Aorta (tissue), 5 donors: ENCODE measurements at regions of chr15 and their contacts with region 1.

Region 1: GRCh38 chr15:45307230-45307924 is 55.3 kb downstream of the SLC28A2 start:
- DNase-seq: no peak
- ATAC-seq: peak; percentile 69
- H3K4me3 ChIP-seq: peak overlapping the region in 1 of 2 donors; percentile 54
- H3K27ac ChIP-seq: no peak overlapping the region
- H3K4me1 ChIP-seq: no peaks in the 10 kb centered on the region
- H3K27me3 ChIP-seq: no peaks in the 10 kb centered on the region

Region 2: DNA sequence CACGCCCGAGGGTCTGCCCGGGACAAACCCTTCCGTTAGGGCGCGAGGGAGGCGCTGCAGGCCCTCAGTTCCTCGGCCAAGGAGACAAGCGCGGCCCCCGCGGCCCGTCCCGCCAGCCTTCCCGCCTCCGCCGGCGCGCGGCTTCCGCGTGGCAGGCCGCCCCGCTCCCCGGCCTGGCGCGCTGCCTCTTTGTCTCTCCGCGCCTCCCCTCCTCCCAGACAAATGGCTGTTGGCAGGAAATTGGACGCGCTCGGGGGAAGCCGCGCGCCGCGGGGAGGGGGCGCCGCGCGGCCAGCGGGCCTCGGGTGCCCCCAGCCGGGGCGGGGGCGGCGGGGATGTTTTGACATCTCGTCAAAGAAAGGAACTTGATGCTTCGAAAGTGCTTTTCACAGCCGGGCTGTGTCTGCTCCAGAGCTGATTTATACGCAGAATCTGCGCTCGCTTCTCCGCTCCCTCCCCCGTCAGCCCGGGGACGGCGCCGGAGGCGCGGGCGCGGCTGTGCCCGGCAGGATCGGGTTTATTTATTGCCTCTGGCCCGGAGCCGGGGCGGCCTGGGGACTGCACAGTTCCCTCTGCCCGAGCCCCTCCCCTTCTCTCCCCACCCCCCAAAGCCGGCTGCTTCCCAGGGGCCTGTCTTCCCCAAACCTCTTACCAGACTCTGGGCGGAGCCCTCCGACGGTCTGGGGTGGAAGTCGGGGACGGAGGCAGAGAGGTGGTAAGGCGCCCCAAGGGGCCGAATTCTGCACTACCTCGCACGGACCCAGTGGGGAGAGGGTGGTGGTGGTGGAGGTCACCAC is 140.3 kb before region 1 on chr15:
- intact Hi-C with region 1: loop called in 1 of 2 experiments (anchors 10 kb)
- DNase-seq: peak; percentile 94
- ATAC-seq: peak; percentile 81
- H3K4me3 ChIP-seq: peak overlapping the region; percentile 69 to 83
- H3K27ac ChIP-seq: peak overlapping the region; percentile 88 to 89
- H3K4me1 ChIP-seq: no peaks in the 10 kb centered on the region
- H3K27me3 ChIP-seq: no peaks in the 10 kb centered on the region

Region 3: DNA sequence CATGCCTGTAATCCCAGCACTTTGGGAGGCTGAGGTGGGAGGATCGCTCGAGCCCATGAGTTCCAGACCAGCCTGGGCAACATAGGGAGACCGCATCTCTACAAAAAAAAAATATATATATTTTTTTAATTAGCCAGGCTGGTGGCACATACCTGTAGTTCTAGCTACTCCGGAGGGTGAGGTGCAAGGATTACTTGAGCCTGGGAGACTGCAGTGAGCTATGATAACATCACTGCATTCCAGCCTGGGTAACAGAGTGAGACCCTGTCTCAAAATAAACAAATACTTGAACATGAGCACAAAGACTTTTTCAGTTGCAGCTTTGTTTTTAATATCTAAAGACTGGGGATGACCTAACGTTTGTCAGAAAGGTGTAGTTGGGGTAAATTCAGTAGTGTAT is 102.2 kb after region 1 on chr15:
- intact Hi-C with region 1: no loop called
- DNase-seq: no peak
- ATAC-seq: no peak
- H3K4me3 ChIP-seq: no peak overlapping the region
- H3K27ac ChIP-seq: no peak overlapping the region
- H3K4me1 ChIP-seq: no peaks in the 10 kb centered on the region
- H3K27me3 ChIP-seq: no peaks in the 10 kb centered on the region